Naive thymus-derived CD4-positive, alpha-beta T cell (primary cell): ENCODE measurements at regions of chr16 and their contacts with region 1.

Region 1: DNA sequence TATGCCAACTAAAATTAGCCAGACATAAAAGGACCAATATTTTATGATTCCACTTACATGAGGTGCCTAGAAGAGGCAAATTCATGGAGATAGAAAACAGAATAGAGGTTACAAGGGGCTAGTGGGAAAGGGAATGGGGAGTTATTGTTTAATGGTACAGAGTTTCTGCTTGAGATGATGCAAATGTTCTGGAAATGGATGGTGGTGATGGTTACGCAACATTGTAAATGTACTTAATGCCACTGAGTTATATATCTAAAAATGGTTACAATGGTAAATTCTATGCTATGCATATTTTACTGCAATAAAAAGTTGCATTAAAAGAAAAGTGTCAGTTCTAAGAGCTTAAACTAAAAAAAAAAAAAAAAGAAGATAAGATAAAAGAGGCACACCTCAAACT is 17.9 kb downstream of the MT1X start:
- DNase-seq: no peak
- ATAC-seq: no peak
- H3K4me3 ChIP-seq: no peak overlapping the region
- H3K4me3 Mint-ChIP-seq: no peak overlapping the region
- H3K27ac ChIP-seq: no peak overlapping the region
- H3K27ac Mint-ChIP-seq: peak overlapping the region in 2 of 9 donors; percentile 45 to 76
- H3K4me1 ChIP-seq: peaks cover 0 to 5% of the 10 kb centered on the region in 2 donors
- H3K4me1 Mint-ChIP-seq: peaks cover 0 to 10% (median 9%) of the 10 kb centered on the region in 7 donors
- H3K27me3 ChIP-seq: no peaks in the 10 kb centered on the region
- H3K27me3 Mint-ChIP-seq: peaks cover 0 to 3% (median 0%) of the 10 kb centered on the region in 5 donors

Region 2: DNA sequence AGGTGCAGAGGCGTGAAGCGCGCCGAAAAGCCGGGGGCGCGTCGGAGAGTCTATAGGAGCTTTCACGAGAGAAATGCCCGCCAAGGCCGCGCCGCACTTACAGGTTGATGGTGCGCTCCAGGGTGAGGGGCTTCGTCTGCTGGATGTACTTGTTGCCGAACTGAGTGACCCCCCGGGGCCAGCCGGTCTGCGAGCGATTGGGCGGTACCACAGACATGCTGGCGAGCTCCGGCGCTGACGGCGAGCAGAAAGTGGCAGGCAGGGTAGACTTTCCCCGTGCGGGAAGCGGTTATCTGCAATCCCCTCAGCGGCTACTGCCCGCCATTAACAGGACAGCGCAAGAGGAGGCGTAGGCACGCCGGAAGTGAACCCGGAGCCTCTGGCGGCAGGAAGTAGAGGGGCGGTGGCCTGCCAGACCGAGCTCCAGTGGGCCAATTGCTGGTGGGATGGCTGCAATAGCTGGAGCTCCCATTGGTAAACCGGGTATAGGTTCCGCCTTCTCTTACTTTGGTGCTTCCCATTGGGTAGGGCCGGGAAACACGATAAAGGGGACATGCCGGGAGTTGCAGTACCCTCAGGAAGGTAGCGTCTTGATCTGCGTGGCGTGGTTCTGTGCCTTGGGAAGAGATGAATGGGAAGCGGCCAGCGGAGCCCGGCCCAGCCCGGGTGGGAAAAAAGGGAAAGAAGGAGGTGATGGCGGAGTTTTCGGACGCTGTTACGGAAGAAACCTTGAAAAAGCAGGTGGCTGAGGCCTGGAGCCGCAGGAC is 249.0 kb before region 1 on chr16 and contains the starts of genes NUDT21 and OGFOD1:
- CTCF ChIA-PET with region 1: no interaction called
- POLR2A ChIA-PET with region 1: no interaction called
- intact Hi-C with region 1: loop called (anchors 1 to 2 kb)
- DNase-seq: peak; percentile 67 to 96 (median 93)
- ATAC-seq: peak; percentile 99
- H3K4me3 ChIP-seq: peak within 1 kb of the TSS; percentile 96
- H3K4me3 Mint-ChIP-seq: peak within 1 kb of the TSS; percentile 94 to 100 (median 97)
- H3K27ac ChIP-seq: peak within 1 kb of the TSS; percentile 92
- H3K27ac Mint-ChIP-seq: peak within 1 kb of the TSS; percentile 92 to 98 (median 93)
- H3K4me1 ChIP-seq: peaks cover 24 to 42% of the 10 kb centered on the region in 2 donors
- H3K4me1 Mint-ChIP-seq: peaks cover 50 to 77% (median 64%) of the 10 kb centered on the region in 7 donors
- H3K27me3 ChIP-seq: no peaks in the 10 kb centered on the region
- H3K27me3 Mint-ChIP-seq: no peaks in the 10 kb centered on the region
- total RNA-seq, gene NUDT21: 74.0 to 191 (median 97.5) TPM
- total RNA-seq, gene OGFOD1: 23.8 to 51.8 (median 42.1) TPM

Region 3: GRCh38 chr16:56576585-56577293 is 123.5 kb before region 1 on chr16:
- CTCF ChIA-PET with region 1: interaction called, 86 read pairs
- POLR2A ChIA-PET with region 1: interaction called, 17 read pairs
- intact Hi-C with region 1: loop called (anchors 1 kb)
- DNase-seq: peak; percentile 81 to 92 (median 88)
- ATAC-seq: peak; percentile 100
- H3K4me3 ChIP-seq: no peak overlapping the region
- H3K4me3 Mint-ChIP-seq: no peak overlapping the region
- H3K27ac ChIP-seq: no peak overlapping the region
- H3K27ac Mint-ChIP-seq: peak overlapping the region; percentile 34 to 89 (median 76)
- H3K4me1 ChIP-seq: peaks cover 3 to 8% of the 10 kb centered on the region in 2 donors
- H3K4me1 Mint-ChIP-seq: peaks cover 0 to 9% (median 8%) of the 10 kb centered on the region in 7 donors
- H3K27me3 ChIP-seq: no peaks in the 10 kb centered on the region
- H3K27me3 Mint-ChIP-seq: peaks cover 0 to 19% (median 0%) of the 10 kb centered on the region in 5 donors

Region 4: GRCh38 chr16:56643080-56643778 is 57.0 kb before region 1 on chr16:
- CTCF ChIA-PET with region 1: interaction called, 7 read pairs
- POLR2A ChIA-PET with region 1: no interaction called
- intact Hi-C with region 1: loop called (anchors 1 to 2 kb)
- DNase-seq: peak; percentile 42 to 79 (median 57)
- ATAC-seq: peak; percentile 99
- H3K4me3 ChIP-seq: peak overlapping the region; percentile 48
- H3K4me3 Mint-ChIP-seq: peak overlapping the region; percentile 60 to 84 (median 80)
- H3K27ac ChIP-seq: peak overlapping the region; percentile 40
- H3K27ac Mint-ChIP-seq: peak overlapping the region in 5 of 9 donors; percentile 37 to 67 (median 54)
- H3K4me1 ChIP-seq: peaks cover 11 to 16% of the 10 kb centered on the region in 2 donors
- H3K4me1 Mint-ChIP-seq: peaks cover 15 to 31% (median 25%) of the 10 kb centered on the region in 7 donors
- H3K27me3 ChIP-seq: peaks cover 0 to 4% of the 10 kb centered on the region in 2 donors
- H3K27me3 Mint-ChIP-seq: peaks cover 28 to 84% (median 34%) of the 10 kb centered on the region in 5 donors

Region 5: GRCh38 chr16:56673921-56674320 is 26.3 kb before region 1 on chr16:
- CTCF ChIA-PET with region 1: interaction called, 33 read pairs
- POLR2A ChIA-PET with region 1: interaction called, 7 read pairs
- intact Hi-C with region 1: loop called (anchors 1 kb)
- DNase-seq: peak in 5 of 9 donors; percentile 36 to 68 (median 50)
- ATAC-seq: peak; percentile 63
- H3K4me3 ChIP-seq: no peak overlapping the region
- H3K4me3 Mint-ChIP-seq: peak overlapping the region in 6 of 10 donors; percentile 1 to 65 (median 29)
- H3K27ac ChIP-seq: no peak overlapping the region
- H3K27ac Mint-ChIP-seq: peak overlapping the region in 4 of 9 donors; percentile 43 to 76 (median 50)
- H3K4me1 ChIP-seq: peaks cover 0 to 6% of the 10 kb centered on the region in 2 donors
- H3K4me1 Mint-ChIP-seq: peaks cover 7 to 39% (median 21%) of the 10 kb centered on the region in 7 donors
- H3K27me3 ChIP-seq: peaks cover 0 to 12% of the 10 kb centered on the region in 2 donors
- H3K27me3 Mint-ChIP-seq: peaks cover 27 to 60% (median 37%) of the 10 kb centered on the region in 5 donors

Region 6: GRCh38 chr16:56789360-56789759 is 89.2 kb after region 1 on chr16:
- CTCF ChIA-PET with region 1: interaction called, 3 read pairs
- POLR2A ChIA-PET with region 1: no interaction called
- intact Hi-C with region 1: loop called in 1 of 2 experiments (anchors 1 kb)
- DNase-seq: peak in 3 of 9 donors; percentile 14 to 33 (median 14)
- ATAC-seq: peak; percentile 50
- H3K4me3 ChIP-seq: no peak overlapping the region
- H3K4me3 Mint-ChIP-seq: no peak overlapping the region
- H3K27ac ChIP-seq: no peak overlapping the region
- H3K27ac Mint-ChIP-seq: no peak overlapping the region
- H3K4me1 ChIP-seq: no peaks in the 10 kb centered on the region
- H3K4me1 Mint-ChIP-seq: peaks cover 0 to 10% (median 0%) of the 10 kb centered on the region in 7 donors
- H3K27me3 ChIP-seq: no peaks in the 10 kb centered on the region
- H3K27me3 Mint-ChIP-seq: no peaks in the 10 kb centered on the region